ENCODE measurements at regions of chr2 and their contacts with region 1.

Region 1: GRCh38 chr2:208466151-208466919 is 59.7 kb downstream of the PTH2R start:
- DNase-seq: peak; percentile 36
- H3K4me3 Mint-ChIP-seq: no peak overlapping the region
- H3K27ac Mint-ChIP-seq: no peak overlapping the region
- H3K4me1 Mint-ChIP-seq: no peaks in the 10 kb centered on the region
- H3K27me3 Mint-ChIP-seq: peaks cover 2% of the 10 kb centered on the region

Region 2: GRCh38 chr2:208373460-208374089 is 92.8 kb before region 1 on chr2:
- CTCF ChIA-PET with region 1: no interaction called
- intact Hi-C with region 1: no loop called
- DNase-seq: peak; percentile 45
- H3K4me3 Mint-ChIP-seq: no peak overlapping the region
- H3K27ac Mint-ChIP-seq: no peak overlapping the region
- H3K4me1 Mint-ChIP-seq: no peaks in the 10 kb centered on the region
- H3K27me3 Mint-ChIP-seq: peaks cover 2% of the 10 kb centered on the region

Region 3: DNA sequence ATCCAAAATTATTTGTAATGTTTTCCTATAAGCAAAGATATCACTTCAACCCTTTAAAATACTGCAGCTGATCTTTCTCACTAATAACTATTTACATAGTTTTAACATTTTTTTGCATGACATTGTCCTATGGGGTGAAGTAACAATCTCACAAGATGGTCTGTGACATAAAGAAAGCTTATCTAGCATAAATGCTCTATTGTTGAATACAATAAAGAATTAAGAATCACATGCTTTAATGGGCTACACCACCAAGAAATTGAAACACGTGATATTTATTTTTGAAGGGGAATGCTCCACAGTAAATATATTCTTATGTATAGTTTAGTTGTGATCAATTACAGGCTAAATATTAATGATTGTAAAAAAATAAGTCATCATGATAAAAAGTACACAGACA is 381.3 kb after region 1 on chr2:
- CTCF ChIA-PET with region 1: no interaction called
- intact Hi-C with region 1: no loop called
- DNase-seq: no peak
- H3K4me3 Mint-ChIP-seq: no peak overlapping the region
- H3K27ac Mint-ChIP-seq: no peak overlapping the region
- H3K4me1 Mint-ChIP-seq: no peaks in the 10 kb centered on the region
- H3K27me3 Mint-ChIP-seq: no peaks in the 10 kb centered on the region

Region 4: DNA sequence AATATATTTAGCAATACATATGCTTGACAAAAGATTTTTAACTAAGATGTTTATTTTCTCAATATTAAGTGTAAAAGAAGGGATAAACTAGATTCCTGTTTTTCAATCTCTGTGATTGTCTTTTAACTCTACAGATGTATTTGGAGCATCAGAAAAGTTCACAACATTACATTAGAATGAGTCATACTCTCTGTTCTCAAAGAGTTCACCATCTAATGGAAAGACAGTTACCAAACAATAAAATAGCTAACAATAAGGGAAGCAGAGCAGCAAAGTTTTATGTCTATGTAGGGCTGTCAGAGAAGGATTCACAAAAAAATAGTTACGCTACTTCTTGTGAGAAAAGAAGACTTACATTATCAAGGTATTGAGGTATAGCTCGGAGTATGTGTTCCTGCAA is 848.3 kb after region 1 on chr2:
- CTCF ChIA-PET with region 1: no interaction called
- intact Hi-C with region 1: loop called (anchors 5 kb)
- DNase-seq: no peak
- H3K4me3 Mint-ChIP-seq: no peak overlapping the region
- H3K27ac Mint-ChIP-seq: no peak overlapping the region
- H3K4me1 Mint-ChIP-seq: no peaks in the 10 kb centered on the region
- H3K27me3 Mint-ChIP-seq: peaks cover 4% of the 10 kb centered on the region